Adrenal gland (tissue), 19 donors: ENCODE measurements at regions of chr9 and their contacts with region 1.

Region 1: DNA sequence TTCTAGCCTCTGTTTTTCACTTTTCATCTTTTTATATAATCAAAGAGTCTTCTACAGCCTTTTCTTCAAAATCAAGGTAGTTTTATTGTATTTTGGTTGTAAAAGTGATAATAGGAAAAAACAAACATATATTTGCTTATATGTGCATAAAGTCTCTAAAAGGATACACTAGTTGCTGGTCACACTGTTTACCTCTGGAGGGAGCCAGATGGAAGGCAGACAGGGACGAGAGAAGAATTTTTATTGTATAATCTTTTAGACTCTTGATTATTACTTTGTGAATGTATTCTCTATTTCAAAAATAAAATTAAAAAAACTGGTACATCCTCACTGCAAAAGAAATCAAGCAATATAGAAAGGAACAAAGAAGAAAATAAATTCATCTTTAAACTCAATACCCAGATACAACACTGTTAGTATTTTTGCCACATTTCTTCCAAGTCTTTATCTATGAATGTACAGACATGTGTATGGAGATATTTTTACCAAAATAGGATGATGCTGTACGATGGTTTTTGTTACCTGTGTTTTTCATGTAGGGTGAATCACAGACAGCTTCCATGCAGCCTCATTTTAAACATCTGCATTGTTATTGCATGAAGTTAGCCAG is 6.1 kb upstream of the RNF183 start:
- DNase-seq: peak; percentile 32 to 65 (median 44)
- H3K4me3 ChIP-seq: no peak overlapping the region
- H3K27ac ChIP-seq: no peak overlapping the region
- H3K4me1 ChIP-seq: peaks cover 0 to 9% of the 10 kb centered on the region in 2 donors
- H3K27me3 ChIP-seq: no peaks in the 10 kb centered on the region
- CTCF ChIP-seq: peak; percentile 51 to 78 (median 74)
- POLR2A ChIP-seq: no peak

Region 2: DNA sequence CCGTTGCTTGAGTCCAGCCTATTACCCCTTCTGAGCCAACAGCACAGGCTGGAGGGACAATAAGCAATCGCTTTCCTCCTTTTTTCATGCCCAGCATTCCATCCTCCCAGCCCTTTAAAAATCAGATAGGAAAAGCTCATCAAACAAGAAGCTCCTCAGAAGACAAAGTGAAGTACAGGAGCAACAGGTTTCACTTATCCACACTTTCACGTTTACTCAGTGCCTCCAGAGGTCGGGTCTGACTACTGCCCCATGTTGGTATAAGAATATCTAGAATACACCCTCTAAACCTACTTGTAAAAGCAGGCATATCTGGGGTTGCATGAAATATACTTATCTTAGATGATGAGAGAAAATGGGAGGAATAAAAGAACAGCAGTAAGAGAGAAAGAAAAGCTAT is 112.3 kb before region 1 on chr9:
- intact Hi-C with region 1: no loop called
- DNase-seq: no peak
- H3K4me3 ChIP-seq: no peak overlapping the region
- H3K27ac ChIP-seq: no peak overlapping the region
- H3K4me1 ChIP-seq: no peaks in the 10 kb centered on the region
- H3K27me3 ChIP-seq: no peaks in the 10 kb centered on the region
- CTCF ChIP-seq: no peak
- POLR2A ChIP-seq: no peak

Region 3: DNA sequence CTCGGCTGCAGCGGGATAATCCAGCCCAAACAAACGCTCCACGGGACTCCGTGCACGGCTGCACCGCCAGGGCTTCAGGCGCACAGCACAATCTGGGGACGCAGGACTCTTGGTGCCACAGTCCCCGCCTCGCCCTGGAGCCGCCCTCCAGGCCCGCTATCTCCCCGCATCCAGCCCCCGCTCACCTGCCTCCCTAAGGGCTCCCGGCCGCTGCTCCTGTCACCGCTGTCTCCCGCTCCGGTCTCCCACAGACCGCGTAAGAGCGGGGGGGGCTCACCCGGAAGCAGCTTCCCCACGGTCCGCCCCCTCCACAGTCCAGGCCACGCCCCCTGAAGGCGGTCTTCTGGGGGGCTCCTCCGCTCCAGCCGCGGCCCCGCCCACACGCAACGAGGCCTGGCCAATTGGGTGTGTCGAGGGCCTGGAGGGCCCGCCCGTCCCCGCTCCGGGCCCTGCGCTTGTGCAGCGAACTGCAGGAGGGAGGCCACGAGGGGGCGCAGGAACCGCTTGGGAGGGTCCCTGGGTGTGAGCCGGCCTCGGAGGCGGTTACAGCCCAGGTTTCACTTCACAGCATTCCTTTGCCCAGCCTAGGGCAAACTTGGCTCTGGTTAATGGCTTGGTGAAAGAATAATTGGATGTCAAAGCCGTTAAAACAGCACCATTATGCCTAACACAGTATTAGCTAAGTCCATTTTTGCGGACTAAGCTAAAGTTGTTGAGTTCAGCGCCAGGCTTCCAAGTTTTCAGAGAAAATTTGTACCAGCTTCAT is 91.9 kb after region 1 on chr9 and contains the start of gene ALAD:
- intact Hi-C with region 1: loop called (anchors 5 to 10 kb)
- DNase-seq: peak; percentile 98 to 100 (median 99)
- H3K4me3 ChIP-seq: peak within 1 kb of the TSS; percentile 42 to 81 (median 51)
- H3K27ac ChIP-seq: peak within 1 kb of the TSS in 4 of 5 donors; percentile 52 to 82 (median 71)
- H3K4me1 ChIP-seq: peaks cover 14 to 47% of the 10 kb centered on the region in 2 donors
- H3K27me3 ChIP-seq: no peaks in the 10 kb centered on the region
- CTCF ChIP-seq: peak; percentile 87 to 97 (median 93)
- POLR2A ChIP-seq: peak; percentile 64 to 87
- total RNA-seq, gene ALAD: 49.2 to 348 (median 242) TPM

Region 4: DNA sequence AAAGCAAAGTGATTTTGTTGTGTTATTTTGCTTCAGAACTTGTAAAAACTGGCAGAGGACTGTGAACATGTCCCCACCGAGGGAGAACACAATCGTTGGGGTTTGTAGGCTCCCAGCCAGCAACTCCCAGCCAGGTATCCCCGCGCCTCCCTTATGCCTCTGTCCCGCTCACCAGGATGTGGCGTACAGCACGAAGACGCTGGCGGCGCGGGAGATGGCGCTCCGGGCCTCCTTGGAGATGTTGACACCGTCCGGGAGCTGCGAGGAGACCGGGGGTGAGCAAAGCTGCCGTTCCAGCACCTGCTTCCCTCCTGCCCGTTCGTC is 100.5 kb after region 1 on chr9:
- intact Hi-C with region 1: loop called (anchors 5 to 10 kb)
- DNase-seq: no peak
- H3K4me3 ChIP-seq: peak overlapping the region; percentile 20 to 96 (median 68)
- H3K27ac ChIP-seq: peak overlapping the region; percentile 69 to 97 (median 94)
- H3K4me1 ChIP-seq: peaks cover 0 to 22% of the 10 kb centered on the region in 2 donors
- H3K27me3 ChIP-seq: no peaks in the 10 kb centered on the region
- CTCF ChIP-seq: no peak
- POLR2A ChIP-seq: no peak

Region 5: DNA sequence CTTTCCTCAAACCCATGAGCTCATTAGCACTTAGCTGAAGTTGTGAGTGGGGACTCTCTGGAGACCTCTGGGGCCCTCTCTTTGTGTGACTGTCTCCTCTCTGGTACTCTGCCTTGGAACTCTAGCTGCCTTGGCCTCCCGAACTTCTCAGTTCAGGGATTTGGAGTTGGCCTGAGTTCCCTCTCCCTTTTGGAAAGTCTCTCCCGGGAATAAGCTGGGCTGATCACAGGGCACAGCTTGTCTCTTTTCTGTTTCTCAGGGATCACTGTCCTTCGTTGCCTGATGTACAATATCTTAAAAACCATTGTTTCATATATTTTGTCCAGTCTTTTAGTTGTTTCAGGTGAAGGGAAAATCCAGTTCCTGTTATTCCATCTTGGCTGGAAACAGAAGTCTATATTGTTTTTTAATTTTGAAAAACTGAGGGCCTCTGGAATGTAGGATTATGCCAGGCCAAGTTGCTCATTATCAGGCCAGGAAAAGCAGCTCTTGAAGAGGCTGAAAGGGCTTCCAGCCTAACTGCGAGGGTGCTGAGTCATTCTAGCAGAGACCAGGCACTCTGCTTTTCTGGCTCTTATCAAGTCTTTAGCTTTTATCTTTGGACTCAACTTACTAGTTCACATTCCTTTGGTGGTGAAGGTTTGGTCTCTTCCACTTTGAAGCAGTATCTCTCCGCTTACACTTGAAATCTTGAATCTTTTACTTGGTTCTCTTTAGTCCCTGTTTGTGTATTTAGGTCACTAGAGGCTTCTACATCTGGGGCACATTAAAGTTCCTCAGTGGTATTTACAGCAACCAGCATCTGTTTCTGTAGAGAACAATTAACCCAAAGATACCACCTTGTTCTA is 145.8 kb after region 1 on chr9:
- intact Hi-C with region 1: no loop called
- DNase-seq: peak; percentile 39 to 89 (median 84)
- H3K4me3 ChIP-seq: no peak overlapping the region
- H3K27ac ChIP-seq: peak overlapping the region; percentile 76 to 88 (median 85)
- H3K4me1 ChIP-seq: peaks cover 5 to 28% of the 10 kb centered on the region in 2 donors
- H3K27me3 ChIP-seq: no peaks in the 10 kb centered on the region
- CTCF ChIP-seq: no peak
- POLR2A ChIP-seq: peak in 1 of 2 donors; percentile 17